Activated B cell treated with CpG ODN at 0.5 μM for 24 hours (primary cell): ENCODE measurements at regions of chr7 and their contacts with region 1.

Region 1: DNA sequence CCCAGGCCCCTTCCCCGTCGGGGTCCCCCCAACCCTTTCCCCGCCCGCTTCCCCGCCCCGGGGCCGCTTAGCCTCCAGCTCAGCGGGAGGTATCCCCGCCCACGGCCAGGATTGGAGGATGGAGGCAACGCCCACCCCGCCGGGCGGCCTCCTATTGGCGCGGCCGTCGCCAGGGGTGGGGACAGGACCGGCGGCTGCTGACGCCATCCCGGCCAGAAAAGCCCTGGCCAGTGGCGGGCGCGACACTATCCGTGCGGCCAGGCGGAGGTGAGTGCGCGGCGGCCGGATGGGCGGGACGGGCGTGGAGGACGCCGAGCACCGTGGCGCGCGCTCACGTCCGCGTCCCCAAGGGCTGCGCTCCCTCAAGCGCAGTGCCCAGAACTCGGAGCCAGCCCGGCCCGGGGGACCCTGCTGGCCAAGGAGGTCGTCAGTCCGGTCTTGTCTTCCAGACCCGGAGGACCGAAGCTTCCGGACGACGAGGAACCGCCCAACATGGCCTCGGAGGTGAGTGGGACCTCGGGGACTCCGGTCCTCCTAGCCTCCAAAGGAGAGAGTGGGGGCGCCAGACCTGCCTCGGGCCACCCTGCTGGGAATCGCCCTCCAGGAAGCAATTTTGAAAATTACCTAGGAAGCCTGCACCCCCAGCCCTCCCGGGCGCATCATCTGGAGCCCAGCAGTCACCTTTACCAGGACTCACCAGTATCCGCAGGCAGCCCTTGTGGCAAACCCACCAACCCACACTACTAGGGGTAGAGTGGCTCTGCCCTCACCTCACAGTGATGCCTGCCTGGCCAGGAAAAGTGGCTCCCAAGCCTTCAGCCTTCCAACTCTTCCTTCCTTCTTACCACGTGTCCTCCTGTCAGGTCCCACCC is at the start of gene ASL:
- DNase-seq: peak; percentile 94
- ATAC-seq: peak; percentile 98
- H3K4me3 Mint-ChIP-seq: peak within 1 kb of the TSS; percentile 86
- H3K27ac Mint-ChIP-seq: peak within 1 kb of the TSS; percentile 73
- H3K4me1 Mint-ChIP-seq: peaks cover 21% of the 10 kb centered on the region
- H3K27me3 Mint-ChIP-seq: no peaks in the 10 kb centered on the region
- CTCF ChIP-seq: no peak
- total RNA-seq, gene ASL: 39.6 and 39.8 TPM in 2 replicates

Region 2: DNA sequence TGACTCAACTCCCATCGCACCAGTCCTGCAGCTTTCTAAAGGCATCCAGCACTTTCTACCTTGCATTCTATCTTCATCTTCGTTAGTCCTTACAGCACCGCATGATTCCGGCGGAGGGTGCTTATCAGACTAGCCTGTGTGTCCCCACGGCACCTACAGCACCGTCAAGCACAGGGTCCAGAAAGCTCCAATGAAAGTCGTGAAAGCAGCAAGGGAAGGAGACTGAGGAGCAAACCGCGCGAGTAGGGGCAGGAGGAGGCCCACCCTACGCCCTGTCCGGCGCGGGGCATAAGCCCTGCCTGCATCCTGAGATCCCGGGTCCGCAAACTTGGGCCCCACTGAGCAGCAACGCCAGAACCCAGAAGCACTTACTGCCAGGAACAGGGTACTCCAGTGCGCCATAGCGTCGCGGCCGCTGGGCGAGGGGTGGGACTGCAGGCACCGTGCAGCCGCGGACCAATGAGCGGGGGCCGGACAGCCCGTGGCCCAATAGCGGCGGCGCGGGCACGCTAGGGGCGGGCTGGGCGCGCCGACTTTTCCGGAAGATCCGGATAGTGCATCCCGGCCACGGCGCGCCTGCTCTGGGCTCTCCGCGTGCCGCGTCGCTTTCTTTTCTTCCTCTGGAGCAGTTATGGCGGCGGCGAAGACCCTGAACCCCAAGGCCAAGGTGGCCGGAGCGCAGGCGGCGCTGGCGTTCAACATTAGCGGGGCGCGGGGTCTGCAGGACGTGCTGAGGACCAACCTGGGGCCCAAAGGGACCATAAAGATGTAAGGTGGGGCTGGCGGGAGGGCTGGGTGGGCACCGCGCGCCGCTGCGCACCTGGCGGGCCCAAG is 325.1 kb before region 1 on chr7:
- CTCF ChIA-PET with region 1: no interaction called
- POLR2A ChIA-PET with region 1: no interaction called
- intact Hi-C with region 1: loop called (anchors 10 kb)
- DNase-seq: peak; percentile 83
- ATAC-seq: peak; percentile 99
- H3K4me3 Mint-ChIP-seq: peak overlapping the region; percentile 96
- H3K27ac Mint-ChIP-seq: peak overlapping the region; percentile 94
- H3K4me1 Mint-ChIP-seq: peaks cover 15% of the 10 kb centered on the region
- H3K27me3 Mint-ChIP-seq: no peaks in the 10 kb centered on the region
- CTCF ChIP-seq: no peak

Region 3: DNA sequence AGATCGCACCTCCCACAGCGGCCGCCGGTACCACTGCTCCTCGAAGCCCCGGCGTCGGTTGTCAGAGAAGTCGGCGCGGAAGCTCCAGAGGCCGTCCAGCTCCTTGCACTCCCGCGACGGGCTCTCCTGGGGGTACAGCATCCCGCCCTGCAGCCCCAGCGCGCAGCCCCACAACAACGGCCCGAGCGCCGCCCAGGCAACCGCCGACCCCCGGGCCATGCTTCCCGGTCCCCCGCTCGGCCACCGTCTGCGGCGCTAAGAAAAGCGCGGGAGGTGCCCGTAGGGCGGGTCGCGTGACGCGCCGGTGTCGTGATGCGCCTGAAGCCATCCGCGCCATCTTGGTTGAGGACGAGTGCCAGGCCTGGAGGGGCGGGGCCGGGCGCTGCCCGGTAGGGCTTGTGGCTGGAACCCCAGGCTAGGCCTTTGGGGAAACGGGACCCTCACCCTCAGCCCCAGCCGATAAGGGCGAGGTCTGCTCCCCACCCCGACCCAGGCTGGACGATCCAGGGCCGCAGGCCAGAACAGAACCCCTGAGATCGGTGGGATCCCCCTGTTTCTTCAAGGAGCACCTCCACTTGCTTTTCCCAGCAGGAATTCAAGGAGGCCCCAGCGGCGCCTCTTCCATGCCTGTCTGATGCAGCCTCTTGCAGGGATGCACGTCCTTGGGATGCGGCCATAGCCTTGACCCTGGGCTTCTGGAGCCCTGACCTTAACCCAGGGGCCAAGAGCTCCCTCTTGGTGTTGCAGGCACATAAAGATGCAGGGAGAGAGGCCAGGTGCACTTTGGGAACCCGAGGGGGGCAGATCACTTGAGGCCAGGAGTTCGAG is 93.6 kb before region 1 on chr7 and contains the start of gene GUSB:
- CTCF ChIA-PET with region 1: no interaction called
- POLR2A ChIA-PET with region 1: interaction called, 4 read pairs
- intact Hi-C with region 1: loop called (anchors 1 kb)
- DNase-seq: peak; percentile 85
- ATAC-seq: peak; percentile 94
- H3K4me3 Mint-ChIP-seq: peak within 1 kb of the TSS; percentile 79
- H3K27ac Mint-ChIP-seq: peak within 1 kb of the TSS; percentile 46
- H3K4me1 Mint-ChIP-seq: peaks cover 19% of the 10 kb centered on the region
- H3K27me3 Mint-ChIP-seq: no peaks in the 10 kb centered on the region
- CTCF ChIP-seq: no peak
- total RNA-seq, gene GUSB: 33.6 and 40.8 TPM in 2 replicates

Region 4: GRCh38 chr7:66043681-66044497 is 31.9 kb before region 1 on chr7:
- CTCF ChIA-PET with region 1: no interaction called
- POLR2A ChIA-PET with region 1: no interaction called
- intact Hi-C with region 1: loop called (anchors 2 kb)
- DNase-seq: peak; percentile 16
- ATAC-seq: peak; percentile 62
- H3K4me3 Mint-ChIP-seq: peak overlapping the region; percentile 85
- H3K27ac Mint-ChIP-seq: no peak overlapping the region
- H3K4me1 Mint-ChIP-seq: peaks cover 8% of the 10 kb centered on the region
- H3K27me3 Mint-ChIP-seq: peaks cover 19% of the 10 kb centered on the region
- CTCF ChIP-seq: no peak

Region 5: GRCh38 chr7:66060796-66061195 is 15.0 kb before region 1 on chr7:
- CTCF ChIA-PET with region 1: no interaction called
- POLR2A ChIA-PET with region 1: no interaction called
- intact Hi-C with region 1: no loop called
- DNase-seq: no peak
- ATAC-seq: no peak
- H3K4me3 Mint-ChIP-seq: no peak overlapping the region
- H3K27ac Mint-ChIP-seq: no peak overlapping the region
- H3K4me1 Mint-ChIP-seq: no peaks in the 10 kb centered on the region
- H3K27me3 Mint-ChIP-seq: no peaks in the 10 kb centered on the region
- CTCF ChIP-seq: no peak

Region 6: GRCh38 chr7:66114793-66115649 is 39.2 kb after region 1 on chr7 and contains the start of gene CRCP:
- CTCF ChIA-PET with region 1: no interaction called
- POLR2A ChIA-PET with region 1: interaction called, 28 read pairs
- intact Hi-C with region 1: loop called (anchors 1 kb)
- DNase-seq: peak; percentile 85
- ATAC-seq: peak; percentile 91
- H3K4me3 Mint-ChIP-seq: peak within 1 kb of the TSS; percentile 95
- H3K27ac Mint-ChIP-seq: peak within 1 kb of the TSS; percentile 95
- H3K4me1 Mint-ChIP-seq: peaks cover 44% of the 10 kb centered on the region
- H3K27me3 Mint-ChIP-seq: no peaks in the 10 kb centered on the region
- CTCF ChIP-seq: no peak
- total RNA-seq, gene CRCP: 40.8 and 42.5 TPM in 2 replicates

Region 7: GRCh38 chr7:66153691-66154090 is 77.9 kb after region 1 on chr7:
- CTCF ChIA-PET with region 1: no interaction called
- POLR2A ChIA-PET with region 1: interaction called, 11 read pairs
- intact Hi-C with region 1: no loop called
- DNase-seq: no peak
- ATAC-seq: no peak
- H3K4me3 Mint-ChIP-seq: no peak overlapping the region
- H3K27ac Mint-ChIP-seq: no peak overlapping the region
- H3K4me1 Mint-ChIP-seq: peaks cover 5% of the 10 kb centered on the region
- H3K27me3 Mint-ChIP-seq: no peaks in the 10 kb centered on the region
- CTCF ChIP-seq: no peak

Region 8: DNA sequence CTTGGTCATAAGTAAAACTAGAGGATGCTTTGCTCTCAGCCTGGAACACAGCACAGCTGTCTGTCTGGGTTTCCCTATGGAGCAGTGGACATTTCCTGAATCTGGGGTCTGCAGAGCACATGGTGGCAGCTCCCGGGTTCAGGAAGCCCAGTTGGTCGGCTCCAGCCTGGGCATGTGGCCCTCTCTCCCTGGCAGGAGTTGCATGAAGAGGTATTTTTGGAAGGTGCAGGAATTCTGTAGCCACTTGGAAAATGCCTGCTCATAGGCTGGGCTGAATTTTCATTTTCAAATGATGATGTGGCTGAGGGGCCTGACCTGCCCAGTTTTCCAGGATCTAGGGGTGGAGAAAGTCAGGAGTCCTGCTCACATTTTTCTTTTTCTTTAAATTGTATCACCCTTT is 122.6 kb after region 1 on chr7:
- CTCF ChIA-PET with region 1: no interaction called
- POLR2A ChIA-PET with region 1: no interaction called
- intact Hi-C with region 1: no loop called
- DNase-seq: no peak
- ATAC-seq: no peak
- H3K4me3 Mint-ChIP-seq: no peak overlapping the region
- H3K27ac Mint-ChIP-seq: no peak overlapping the region
- H3K4me1 Mint-ChIP-seq: peaks cover 7% of the 10 kb centered on the region
- H3K27me3 Mint-ChIP-seq: peaks cover 17% of the 10 kb centered on the region
- CTCF ChIP-seq: no peak